Endothelial cell of umbilical vein (primary cell): ENCODE measurements at regions of chr14 and their contacts with region 1.

Region 1: GRCh38 chr14:32252030-32252670 is 49.1 kb upstream of the RNU6-8 start:
- DNase-seq: peak; percentile 69
- H3K4me3 ChIP-seq: no peak overlapping the region
- H3K27ac ChIP-seq: no peak overlapping the region
- H3K4me1 ChIP-seq: no peaks in the 10 kb centered on the region
- H3K27me3 ChIP-seq: no peaks in the 10 kb centered on the region
- CTCF ChIP-seq: peak; percentile 73 to 82
- POLR2A ChIP-seq: no peak

Region 2: GRCh38 chr14:31360919-31361662 is 891.1 kb before region 1 on chr14:
- CTCF ChIA-PET with region 1: interaction called, 5 read pairs
- POLR2A ChIA-PET with region 1: no interaction called
- dilution Hi-C with region 1: no loop called
- intact Hi-C with region 1: loop called (anchors 10 kb)
- DNase-seq: peak; percentile 22
- H3K4me3 ChIP-seq: no peak overlapping the region
- H3K27ac ChIP-seq: peak overlapping the region; percentile 68
- H3K4me1 ChIP-seq: peaks cover 28% of the 10 kb centered on the region
- H3K27me3 ChIP-seq: no peaks in the 10 kb centered on the region
- CTCF ChIP-seq: no peak
- POLR2A ChIP-seq: no peak

Region 3: DNA sequence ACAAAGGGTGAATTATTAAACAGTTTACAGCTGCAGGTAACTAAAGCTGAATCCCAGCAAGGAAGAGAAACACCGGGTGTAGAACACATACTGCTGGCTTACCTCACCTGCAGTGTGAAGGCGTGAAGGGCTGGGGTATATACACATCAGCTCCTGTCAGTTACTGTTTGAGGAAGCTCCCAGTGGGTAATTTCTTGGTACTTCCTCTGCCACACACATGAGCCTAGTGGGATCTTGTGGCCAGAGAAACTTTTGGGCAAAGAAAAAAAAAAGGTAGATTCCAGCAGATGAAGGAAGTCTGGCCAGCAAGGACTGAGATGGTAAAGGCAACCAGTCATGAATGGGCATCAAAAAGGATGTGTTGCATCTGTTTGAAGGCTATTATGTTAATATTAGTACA is 750.3 kb before region 1 on chr14:
- CTCF ChIA-PET with region 1: interaction called, 14 read pairs
- POLR2A ChIA-PET with region 1: no interaction called
- dilution Hi-C with region 1: no loop called
- intact Hi-C with region 1: no loop called
- DNase-seq: no peak
- H3K4me3 ChIP-seq: no peak overlapping the region
- H3K27ac ChIP-seq: no peak overlapping the region
- H3K4me1 ChIP-seq: no peaks in the 10 kb centered on the region
- H3K27me3 ChIP-seq: peaks cover 2 to 8% of the 10 kb centered on the region in 2 experiments
- CTCF ChIP-seq: no peak
- POLR2A ChIP-seq: no peak

Region 4: DNA sequence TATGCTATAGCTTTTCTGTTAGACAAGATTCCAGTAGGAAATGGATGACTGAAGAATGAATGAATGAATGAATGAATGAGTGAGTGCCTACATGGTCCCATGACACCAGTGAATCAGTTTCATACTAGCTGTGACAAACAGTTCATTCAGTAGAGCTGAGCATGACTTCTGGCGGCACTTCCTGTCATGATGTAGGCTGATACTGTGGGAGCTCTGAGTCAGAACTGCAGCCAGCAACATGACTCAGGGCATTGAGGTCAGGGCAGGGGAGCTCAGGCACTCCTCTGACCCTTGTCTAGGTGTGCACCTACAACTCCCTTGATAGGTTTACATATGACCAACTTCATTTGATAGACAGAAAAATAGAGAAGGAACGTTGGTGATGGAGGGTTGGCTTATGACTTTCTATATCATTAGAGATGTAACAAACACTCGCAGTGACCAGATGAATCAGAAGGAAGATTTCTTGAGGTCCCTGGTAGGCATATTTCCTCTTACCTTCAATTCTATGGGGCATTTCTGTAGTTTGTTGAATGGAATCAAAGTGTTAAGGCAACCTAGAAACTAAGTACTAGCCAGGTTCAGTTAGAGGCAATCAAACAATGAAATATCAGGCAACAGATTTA is 314.3 kb before region 1 on chr14:
- CTCF ChIA-PET with region 1: interaction called, 9 read pairs
- POLR2A ChIA-PET with region 1: no interaction called
- dilution Hi-C with region 1: no loop called
- intact Hi-C with region 1: loop called (anchors 1 kb)
- DNase-seq: peak; percentile 68
- H3K4me3 ChIP-seq: no peak overlapping the region
- H3K27ac ChIP-seq: peak overlapping the region; percentile 24
- H3K4me1 ChIP-seq: peaks cover 21% of the 10 kb centered on the region
- H3K27me3 ChIP-seq: peaks cover 8 to 11% of the 10 kb centered on the region in 2 experiments
- CTCF ChIP-seq: no peak
- POLR2A ChIP-seq: no peak

Region 5: DNA sequence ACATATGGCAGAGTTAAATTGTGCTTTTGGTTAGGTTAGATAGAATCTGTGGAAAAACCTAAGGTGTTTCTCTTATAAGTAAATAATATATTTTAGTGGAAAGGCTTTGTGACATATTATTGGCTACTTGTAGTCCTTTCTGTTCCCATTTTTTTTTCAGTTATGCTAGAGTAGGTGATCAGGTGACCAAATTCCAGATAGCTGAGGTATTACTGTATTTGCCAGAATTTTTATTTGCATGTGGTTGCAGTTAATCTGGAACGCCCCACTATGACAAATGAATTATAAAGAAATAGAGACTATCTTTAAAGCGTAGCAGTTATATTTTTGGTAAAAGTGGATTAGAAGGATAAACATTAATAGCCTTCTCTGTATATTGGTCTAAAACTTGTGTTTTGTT is 123.0 kb before region 1 on chr14:
- CTCF ChIA-PET with region 1: no interaction called
- POLR2A ChIA-PET with region 1: no interaction called
- dilution Hi-C with region 1: no loop called
- intact Hi-C with region 1: no loop called
- DNase-seq: no peak
- H3K4me3 ChIP-seq: no peak overlapping the region
- H3K27ac ChIP-seq: no peak overlapping the region
- H3K4me1 ChIP-seq: no peaks in the 10 kb centered on the region
- H3K27me3 ChIP-seq: no peaks in the 10 kb centered on the region
- CTCF ChIP-seq: no peak
- POLR2A ChIP-seq: no peak

Region 6: DNA sequence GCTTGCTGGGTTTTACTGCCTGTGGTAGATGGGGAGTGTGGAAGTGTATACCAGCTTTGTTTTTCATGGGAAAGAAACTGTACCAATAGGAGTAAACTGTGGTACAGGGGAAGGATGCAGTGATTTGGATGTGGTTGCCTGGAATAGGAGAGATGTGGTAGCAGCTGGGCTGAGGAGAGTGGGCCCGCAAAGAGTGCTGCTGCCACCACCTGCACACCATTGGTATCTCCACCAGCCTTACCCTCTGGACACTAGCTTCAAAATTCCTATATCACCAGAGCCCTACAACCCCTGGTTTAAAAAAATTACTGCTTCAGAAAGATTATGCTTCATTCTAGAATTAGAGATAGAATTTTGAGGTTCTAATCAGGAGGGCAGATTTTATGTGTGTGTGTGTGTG is 130.6 kb after region 1 on chr14:
- CTCF ChIA-PET with region 1: interaction called, 20 read pairs
- POLR2A ChIA-PET with region 1: no interaction called
- dilution Hi-C with region 1: no loop called
- intact Hi-C with region 1: no loop called
- DNase-seq: no peak
- H3K4me3 ChIP-seq: no peak overlapping the region
- H3K27ac ChIP-seq: no peak overlapping the region
- H3K4me1 ChIP-seq: no peaks in the 10 kb centered on the region
- H3K27me3 ChIP-seq: no peaks in the 10 kb centered on the region
- CTCF ChIP-seq: peak in 1 of 2 donors; percentile 13
- POLR2A ChIP-seq: no peak

Region 7: DNA sequence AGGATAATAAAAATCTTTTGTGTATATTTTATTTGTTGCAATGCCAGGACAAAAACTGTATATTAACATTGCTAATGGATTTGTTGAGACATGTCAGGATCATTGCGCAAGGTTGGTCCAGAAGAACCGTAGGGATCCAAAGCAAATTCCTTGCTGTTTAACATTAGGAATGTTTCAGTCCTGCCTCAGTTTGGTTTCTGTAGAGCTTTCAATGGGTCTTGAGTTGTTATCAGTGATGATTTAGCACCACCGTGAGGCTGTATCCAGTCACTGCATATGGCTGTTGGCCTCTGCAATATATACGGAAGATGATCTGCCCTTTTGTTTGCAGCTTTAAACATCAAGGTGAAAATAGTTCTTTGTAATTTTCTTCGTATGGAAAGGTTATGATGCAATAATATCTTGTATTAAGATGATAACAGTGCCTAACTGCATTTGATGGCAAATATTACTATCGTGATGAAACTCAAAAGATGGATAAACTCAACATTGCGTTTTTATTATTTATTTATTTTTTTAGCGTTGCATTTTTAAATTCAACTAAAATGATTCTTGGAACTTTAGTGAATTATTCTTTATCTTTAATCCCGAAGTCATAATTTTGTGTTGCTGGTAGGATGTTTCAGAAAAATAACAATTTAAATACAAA is 308.2 kb after region 1 on chr14:
- CTCF ChIA-PET with region 1: interaction called, 95 read pairs
- POLR2A ChIA-PET with region 1: no interaction called
- dilution Hi-C with region 1: no loop called
- intact Hi-C with region 1: loop called (anchors 1 kb)
- DNase-seq: peak; percentile 76
- H3K4me3 ChIP-seq: no peak overlapping the region
- H3K27ac ChIP-seq: no peak overlapping the region
- H3K4me1 ChIP-seq: peaks cover 2% of the 10 kb centered on the region
- H3K27me3 ChIP-seq: no peaks in the 10 kb centered on the region
- CTCF ChIP-seq: peak; percentile 76 to 83
- POLR2A ChIP-seq: no peak